ENCODE measurements at regions of chr11 and their contacts with region 1.

Region 1: GRCh38 chr11:6705905-6706535 is 22.9 kb upstream of the MRPL17 start:
- DNase-seq: peak; percentile 19
- H3K4me3 Mint-ChIP-seq: no peak overlapping the region
- H3K27ac Mint-ChIP-seq: no peak overlapping the region
- H3K4me1 Mint-ChIP-seq: peaks cover 7% of the 10 kb centered on the region
- H3K27me3 Mint-ChIP-seq: no peaks in the 10 kb centered on the region

Region 2: GRCh38 chr11:6377902-6378639 is 327.9 kb before region 1 on chr11:
- intact Hi-C with region 1: loop called (anchors 1 kb)
- DNase-seq: no peak
- H3K4me3 Mint-ChIP-seq: peak overlapping the region; percentile 19
- H3K27ac Mint-ChIP-seq: peak overlapping the region; percentile 44
- H3K4me1 Mint-ChIP-seq: peaks cover 33% of the 10 kb centered on the region
- H3K27me3 Mint-ChIP-seq: peaks cover 4% of the 10 kb centered on the region

Region 3: DNA sequence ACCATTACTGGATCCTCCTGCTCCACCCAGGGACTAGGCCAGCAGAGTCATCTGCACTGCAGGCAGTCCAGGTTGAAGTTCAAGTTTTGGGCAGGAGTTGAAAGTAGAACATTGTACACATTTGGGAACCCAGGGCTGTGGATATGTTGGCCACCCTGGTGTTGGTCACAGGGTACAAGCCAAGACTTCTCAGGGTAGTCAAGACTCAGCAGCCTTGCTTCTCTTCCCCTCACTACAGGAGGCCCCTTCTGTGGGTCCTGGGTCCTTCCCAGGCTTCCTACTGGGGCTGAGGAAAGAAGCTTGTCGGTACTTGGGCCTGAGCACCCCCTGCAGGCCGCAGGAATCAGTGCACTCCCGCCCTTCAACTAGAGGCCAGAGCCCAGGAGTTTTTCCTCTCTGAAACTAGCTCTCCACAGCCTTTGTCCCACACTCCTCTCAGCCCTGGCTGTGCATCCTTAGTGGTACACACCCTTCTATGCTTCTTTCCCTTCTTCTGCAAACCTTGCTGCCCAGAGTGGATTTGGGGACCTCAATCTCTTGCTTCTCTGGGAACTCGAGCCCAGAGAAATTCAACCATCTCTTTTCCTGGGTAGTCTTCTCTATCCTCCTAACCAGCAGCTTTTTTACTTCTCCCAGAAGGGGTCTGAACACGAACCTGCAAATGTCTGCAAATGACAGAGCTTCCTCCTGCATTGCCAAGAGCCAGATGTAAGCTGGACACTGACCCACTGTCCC is 262.6 kb before region 1 on chr11:
- intact Hi-C with region 1: loop called (anchors 2 kb)
- DNase-seq: peak; percentile 39
- H3K4me3 Mint-ChIP-seq: no peak overlapping the region
- H3K27ac Mint-ChIP-seq: no peak overlapping the region
- H3K4me1 Mint-ChIP-seq: no peaks in the 10 kb centered on the region
- H3K27me3 Mint-ChIP-seq: peaks cover 8% of the 10 kb centered on the region

Region 4: DNA sequence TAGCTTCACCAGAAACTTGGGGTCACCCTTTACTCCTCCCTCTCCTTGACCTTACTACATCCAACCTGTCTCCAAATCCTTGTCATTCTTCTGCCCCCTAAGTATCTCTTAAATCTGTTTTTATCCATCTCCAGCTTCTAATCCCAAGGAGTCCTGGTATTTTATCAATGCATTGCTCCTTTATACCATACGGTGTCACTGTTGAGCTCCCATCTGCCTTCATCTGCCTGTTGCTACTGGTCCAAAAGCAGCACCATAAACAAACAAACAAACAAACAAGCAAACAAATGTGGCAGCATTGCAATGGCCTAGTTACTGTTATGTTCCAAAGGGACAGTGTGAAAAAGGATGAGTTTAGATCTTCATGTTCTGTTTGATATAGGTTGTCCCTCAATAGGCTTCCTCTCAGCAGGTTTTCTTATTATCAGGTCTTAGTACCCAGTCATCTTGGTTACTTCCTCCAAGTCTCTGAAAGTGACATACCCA is 174.7 kb before region 1 on chr11:
- intact Hi-C with region 1: loop called (anchors 1 kb)
- DNase-seq: peak; percentile 16
- H3K4me3 Mint-ChIP-seq: no peak overlapping the region
- H3K27ac Mint-ChIP-seq: no peak overlapping the region
- H3K4me1 Mint-ChIP-seq: peaks cover 12% of the 10 kb centered on the region
- H3K27me3 Mint-ChIP-seq: no peaks in the 10 kb centered on the region

Region 5: GRCh38 chr11:6737872-6738466 is 31.9 kb after region 1 on chr11:
- intact Hi-C with region 1: loop called (anchors 1 kb)
- DNase-seq: peak; percentile 52
- H3K4me3 Mint-ChIP-seq: no peak overlapping the region
- H3K27ac Mint-ChIP-seq: no peak overlapping the region
- H3K4me1 Mint-ChIP-seq: peaks cover 71% of the 10 kb centered on the region
- H3K27me3 Mint-ChIP-seq: no peaks in the 10 kb centered on the region

Measured in activated T-helper 1 cell treated with anti-CD3 and anti-CD28 coated beads, Interleukin-12 subunit alpha, Interleukin-12 subunit beta, Interleukin-2, Interleukin-4 antibody, amounts not matched to agents 30 ng/mL and 10 ng/mL and 1 ng/mL, durations not matched to agents 14 hours and 24 hours and 36 hours (primary cell).